Posterior cingulate gyrus (tissue), 11 donors: ENCODE measurements at regions of chr10 and their contacts with region 1.

Region 1: DNA sequence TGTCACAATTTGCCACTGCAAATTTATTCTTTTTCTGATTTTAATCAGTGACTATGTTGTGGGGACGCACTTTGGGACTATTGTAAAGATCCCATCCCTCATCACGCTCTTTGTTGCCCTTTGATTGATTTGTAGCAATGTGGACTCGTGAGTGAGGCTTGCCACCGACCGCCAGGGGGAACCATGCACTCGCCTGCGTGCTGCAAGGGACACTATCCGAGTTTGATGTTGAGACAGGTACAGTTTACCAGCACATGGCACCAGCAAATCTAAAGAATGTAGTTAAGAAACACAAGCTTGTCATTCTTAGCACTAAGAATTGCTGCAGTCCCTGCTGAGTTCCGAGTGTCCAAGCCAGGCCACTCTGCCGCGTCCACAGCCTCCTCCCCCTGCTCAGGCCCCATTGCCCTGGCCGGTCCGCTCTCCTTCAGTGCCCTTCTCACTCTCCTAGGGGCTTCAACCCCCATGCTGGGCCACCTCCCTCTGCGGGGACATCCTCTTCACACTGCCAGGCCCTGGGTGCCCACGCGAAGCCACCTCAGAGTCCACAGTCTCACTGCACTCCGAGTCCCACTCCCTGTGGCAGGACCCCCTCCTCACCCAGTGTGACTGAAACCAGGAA is 2.0 kb upstream of the SFTPA2 start:
- DNase-seq: peak; percentile 40 to 96 (median 74)

Region 2: DNA sequence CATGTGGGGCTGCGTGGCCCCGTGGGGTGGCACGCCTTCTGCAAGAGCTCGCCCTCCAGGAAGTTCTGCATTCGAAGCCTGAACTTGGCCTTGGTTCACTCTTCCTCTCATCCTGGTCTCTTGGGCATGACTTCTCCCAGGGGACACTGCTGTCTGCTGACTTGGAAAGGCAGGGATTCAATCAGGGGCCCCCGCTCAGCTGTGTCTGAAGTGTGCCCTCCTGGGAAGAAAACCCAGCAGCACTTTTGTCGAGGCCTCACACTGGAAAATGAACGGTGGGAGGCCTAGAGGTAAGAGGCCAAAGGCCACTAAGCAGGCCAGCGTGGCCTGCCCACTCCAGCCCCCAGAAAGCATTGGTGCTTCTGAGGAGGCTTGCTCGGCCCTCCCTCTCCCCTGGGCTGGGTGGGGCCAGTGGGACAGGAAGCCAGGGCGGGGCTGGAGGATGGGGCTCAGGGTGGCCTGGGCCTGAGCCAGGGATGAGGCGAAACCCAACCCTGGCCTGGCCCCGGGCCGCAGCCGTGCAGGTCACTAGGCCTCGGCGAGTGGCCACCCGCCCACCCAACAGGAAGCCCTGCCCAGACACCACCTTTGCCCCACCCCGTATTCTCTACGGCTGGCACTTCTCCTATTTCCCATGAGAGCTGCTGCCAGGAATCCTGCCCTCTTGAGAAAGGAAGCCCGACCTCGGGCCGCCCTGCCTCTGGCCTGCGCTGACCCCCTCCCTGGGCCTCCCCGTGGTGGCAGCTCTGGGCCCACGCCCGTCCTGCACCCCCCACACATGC is 412.4 kb before region 1 on chr10:
- intact Hi-C with region 1: no loop called
- DNase-seq: peak in 1 of 10 donors; percentile 71

Region 3: DNA sequence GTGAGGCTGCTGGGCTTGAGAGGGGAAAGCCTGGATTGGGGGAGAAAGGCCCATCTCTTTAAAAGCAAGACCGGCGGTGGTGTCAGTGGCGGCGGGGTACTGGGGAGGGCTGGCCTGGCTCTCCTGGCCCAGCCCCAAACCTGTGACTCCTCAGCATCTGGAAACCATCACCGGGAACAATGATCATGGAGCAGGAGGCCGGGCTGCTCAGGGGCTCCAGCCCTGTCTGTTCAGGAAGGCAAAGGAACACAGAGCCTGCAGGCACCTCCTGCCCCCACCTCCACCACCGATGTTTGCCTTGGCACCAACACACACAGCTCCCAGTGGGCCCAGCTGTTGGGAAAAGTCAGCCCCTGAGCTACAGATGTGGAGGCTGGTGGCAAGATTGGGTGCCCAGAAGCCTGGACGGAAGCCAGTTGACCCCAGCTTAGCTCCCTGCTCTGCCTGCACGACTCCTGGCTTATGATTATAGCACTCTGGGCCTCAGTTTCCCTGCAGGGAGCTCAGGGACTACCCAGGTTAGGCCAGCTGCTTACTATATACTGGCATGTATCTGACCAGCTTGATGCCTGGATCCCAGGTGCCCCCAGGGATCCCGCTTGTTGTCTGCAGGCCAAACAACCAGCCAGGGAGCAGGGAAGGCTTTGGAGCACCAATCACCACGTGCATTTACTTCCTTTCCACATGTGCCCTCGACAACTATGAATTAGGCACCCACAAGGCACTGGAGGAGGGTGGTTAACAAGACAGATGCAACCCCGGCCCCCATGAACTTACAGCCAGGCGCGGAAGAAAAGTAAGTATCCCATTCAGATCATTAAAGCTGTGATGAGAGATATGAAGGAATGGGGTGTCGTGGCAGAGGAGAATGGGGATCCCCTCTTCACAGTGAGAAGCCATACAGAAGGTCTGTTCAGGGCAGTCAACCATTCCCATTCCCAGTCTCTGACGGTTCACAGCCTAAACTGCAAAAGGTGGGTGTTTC is 154.1 kb before region 1 on chr10:
- intact Hi-C with region 1: no loop called
- DNase-seq: peak in 5 of 10 donors; percentile 24 to 87 (median 74)

Region 4: GRCh38 chr10:79601939-79602338 is 39.7 kb after region 1 on chr10:
- intact Hi-C with region 1: no loop called
- DNase-seq: no peak

Region 5: DNA sequence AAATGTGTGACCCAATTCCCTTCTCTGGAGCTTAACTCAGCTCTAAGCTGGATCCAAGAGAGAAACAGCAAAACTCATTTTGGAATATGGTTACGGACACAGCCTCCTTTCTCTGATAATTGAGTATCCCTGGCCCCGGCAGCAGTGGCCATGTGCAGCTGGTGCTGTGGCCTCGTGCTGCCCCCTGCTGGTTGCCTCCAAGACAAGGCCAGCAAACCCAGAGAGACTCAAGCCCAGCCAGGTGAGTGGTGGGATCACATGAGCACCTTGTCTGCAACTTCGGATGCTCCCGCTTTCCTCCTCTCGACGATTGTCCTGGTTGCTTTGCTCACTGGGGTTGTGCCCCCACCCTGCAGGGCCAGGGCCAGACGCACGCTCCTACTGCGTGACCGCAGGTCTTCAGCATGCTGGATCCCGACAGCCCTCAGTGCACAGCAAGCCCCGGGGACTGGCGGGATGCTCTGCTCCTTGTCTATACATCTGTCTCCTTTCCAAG is 367.2 kb after region 1 on chr10:
- intact Hi-C with region 1: loop called (anchors 10 kb)
- DNase-seq: peak; percentile 47 to 95 (median 76)

Region 6: GRCh38 chr10:80055760-80056159 is 493.5 kb after region 1 on chr10:
- intact Hi-C with region 1: no loop called
- DNase-seq: no peak